Activated B cell treated with CpG ODN at 0.5 μM for 24 hours (primary cell): ENCODE measurements at regions of chr1 and their contacts with region 1.

Region 1: DNA sequence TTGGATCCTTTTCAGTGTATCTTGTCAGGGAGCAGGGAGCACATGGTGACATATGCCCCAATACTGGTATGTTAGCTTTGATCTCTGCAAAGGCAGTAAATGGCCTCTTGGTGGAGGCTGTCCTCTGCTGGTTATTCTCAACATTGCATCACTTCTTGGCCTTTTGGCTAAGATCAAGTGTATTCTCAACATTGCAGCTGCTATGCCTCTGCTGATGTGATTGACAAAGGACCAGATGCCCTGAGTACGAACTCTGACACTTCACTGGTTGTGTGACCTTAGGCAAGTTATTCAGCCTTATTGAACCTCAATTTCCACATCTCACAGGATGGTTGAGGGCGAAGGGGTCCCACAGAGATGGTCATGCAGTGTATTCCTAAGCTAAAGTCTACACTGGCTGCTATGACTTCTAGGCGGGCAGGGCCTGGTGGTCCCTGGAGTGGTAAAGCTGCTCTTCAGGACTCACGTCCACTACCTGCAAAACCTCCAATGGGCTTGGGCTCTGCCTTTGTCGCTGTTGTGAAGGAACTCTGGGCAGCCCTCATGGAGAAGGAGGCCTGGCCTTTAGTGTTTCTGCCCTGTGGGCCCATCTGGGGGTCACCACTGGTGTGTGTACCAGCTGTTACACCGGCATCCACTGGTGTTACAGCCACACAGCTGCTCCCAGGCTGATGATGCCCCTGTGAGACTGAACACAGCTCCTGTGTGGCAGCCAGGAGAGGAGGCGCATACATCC is 64.8 kb downstream of the DNTTIP2 start:
- DNase-seq: no peak
- ATAC-seq: peak; percentile 97
- H3K4me3 Mint-ChIP-seq: no peak overlapping the region
- H3K27ac Mint-ChIP-seq: no peak overlapping the region
- H3K4me1 Mint-ChIP-seq: peaks cover 16% of the 10 kb centered on the region
- H3K27me3 Mint-ChIP-seq: no peaks in the 10 kb centered on the region
- CTCF ChIP-seq: peak; percentile 55

Region 2: GRCh38 chr1:93304716-93305138 is 509.5 kb before region 1 on chr1:
- CTCF ChIA-PET with region 1: interaction called, 22 read pairs
- POLR2A ChIA-PET with region 1: no interaction called
- intact Hi-C with region 1: loop called (anchors 1 kb)
- DNase-seq: no peak
- ATAC-seq: peak; percentile 71
- H3K4me3 Mint-ChIP-seq: no peak overlapping the region
- H3K27ac Mint-ChIP-seq: no peak overlapping the region
- H3K4me1 Mint-ChIP-seq: no peaks in the 10 kb centered on the region
- H3K27me3 Mint-ChIP-seq: no peaks in the 10 kb centered on the region
- CTCF ChIP-seq: peak; percentile 87

Region 3: DNA sequence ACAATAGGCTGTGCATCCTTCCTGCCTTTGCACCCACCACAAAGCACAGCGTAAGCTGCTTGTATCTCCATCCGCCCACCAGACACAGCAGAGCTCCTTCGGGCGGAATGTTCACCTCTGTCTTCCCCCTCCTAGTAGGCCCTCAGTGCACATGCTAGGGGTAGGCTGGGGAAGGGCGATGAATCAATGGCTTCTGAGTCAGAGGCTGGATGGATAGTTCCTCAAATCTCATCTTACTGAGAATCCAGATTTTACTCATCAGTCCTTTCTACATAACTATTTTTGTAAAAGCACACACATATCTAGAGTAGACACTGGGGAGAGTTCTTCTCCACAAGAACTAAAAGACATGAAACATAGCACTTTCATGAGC is 206.4 kb before region 1 on chr1:
- CTCF ChIA-PET with region 1: interaction called, 19 read pairs
- POLR2A ChIA-PET with region 1: interaction called, 3 read pairs
- intact Hi-C with region 1: no loop called
- DNase-seq: no peak
- ATAC-seq: peak; percentile 91
- H3K4me3 Mint-ChIP-seq: peak overlapping the region; percentile 62
- H3K27ac Mint-ChIP-seq: peak overlapping the region; percentile 87
- H3K4me1 Mint-ChIP-seq: peaks cover 69% of the 10 kb centered on the region
- H3K27me3 Mint-ChIP-seq: no peaks in the 10 kb centered on the region
- CTCF ChIP-seq: no peak

Region 4: GRCh38 chr1:93638981-93639380 is 175.2 kb before region 1 on chr1:
- CTCF ChIA-PET with region 1: interaction called, 458 read pairs
- POLR2A ChIA-PET with region 1: interaction called, 3 read pairs
- intact Hi-C with region 1: no loop called
- DNase-seq: no peak
- ATAC-seq: no peak
- H3K4me3 Mint-ChIP-seq: no peak overlapping the region
- H3K27ac Mint-ChIP-seq: no peak overlapping the region
- H3K4me1 Mint-ChIP-seq: peaks cover 31% of the 10 kb centered on the region
- H3K27me3 Mint-ChIP-seq: no peaks in the 10 kb centered on the region
- CTCF ChIP-seq: no peak

Region 5: DNA sequence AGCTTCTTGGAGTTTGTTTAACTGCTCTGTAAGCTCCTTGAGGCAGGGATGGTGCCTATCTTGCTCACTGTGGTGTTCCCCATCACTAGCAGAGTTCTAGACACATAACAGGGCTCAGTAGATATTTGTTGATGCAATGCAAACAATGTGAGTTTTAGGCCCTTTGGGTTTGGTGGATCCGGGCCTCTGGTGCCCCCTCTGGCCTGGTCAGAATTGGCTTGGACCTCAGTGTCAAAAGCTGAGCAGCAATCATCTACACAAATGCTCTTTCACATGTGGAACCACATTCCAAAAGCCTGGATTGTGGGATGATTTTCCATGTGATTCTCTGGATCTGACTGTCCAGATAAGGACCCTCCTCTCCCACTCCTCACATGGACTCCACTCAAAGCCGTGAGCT is 79.2 kb before region 1 on chr1:
- CTCF ChIA-PET with region 1: interaction called, 6 read pairs
- POLR2A ChIA-PET with region 1: no interaction called
- intact Hi-C with region 1: loop called (anchors 1 kb)
- DNase-seq: no peak
- ATAC-seq: peak; percentile 28
- H3K4me3 Mint-ChIP-seq: no peak overlapping the region
- H3K27ac Mint-ChIP-seq: no peak overlapping the region
- H3K4me1 Mint-ChIP-seq: peaks cover 14% of the 10 kb centered on the region
- H3K27me3 Mint-ChIP-seq: no peaks in the 10 kb centered on the region
- CTCF ChIP-seq: no peak

Region 6: GRCh38 chr1:93878889-93879586 is 64.8 kb after region 1 on chr1 and contains the start of gene DNTTIP2:
- CTCF ChIA-PET with region 1: no interaction called
- POLR2A ChIA-PET with region 1: no interaction called
- intact Hi-C with region 1: loop called (anchors 1 kb)
- DNase-seq: peak; percentile 77
- ATAC-seq: peak; percentile 91
- H3K4me3 Mint-ChIP-seq: peak within 1 kb of the TSS; percentile 96
- H3K27ac Mint-ChIP-seq: peak within 1 kb of the TSS; percentile 97
- H3K4me1 Mint-ChIP-seq: peaks cover 48% of the 10 kb centered on the region
- H3K27me3 Mint-ChIP-seq: no peaks in the 10 kb centered on the region
- CTCF ChIP-seq: no peak
- total RNA-seq, gene DNTTIP2: 65.6 and 69.7 TPM in 2 replicates